MCF 10A (cell line): ENCODE measurements at regions of chr15 and their contacts with region 1.

Region 1: DNA sequence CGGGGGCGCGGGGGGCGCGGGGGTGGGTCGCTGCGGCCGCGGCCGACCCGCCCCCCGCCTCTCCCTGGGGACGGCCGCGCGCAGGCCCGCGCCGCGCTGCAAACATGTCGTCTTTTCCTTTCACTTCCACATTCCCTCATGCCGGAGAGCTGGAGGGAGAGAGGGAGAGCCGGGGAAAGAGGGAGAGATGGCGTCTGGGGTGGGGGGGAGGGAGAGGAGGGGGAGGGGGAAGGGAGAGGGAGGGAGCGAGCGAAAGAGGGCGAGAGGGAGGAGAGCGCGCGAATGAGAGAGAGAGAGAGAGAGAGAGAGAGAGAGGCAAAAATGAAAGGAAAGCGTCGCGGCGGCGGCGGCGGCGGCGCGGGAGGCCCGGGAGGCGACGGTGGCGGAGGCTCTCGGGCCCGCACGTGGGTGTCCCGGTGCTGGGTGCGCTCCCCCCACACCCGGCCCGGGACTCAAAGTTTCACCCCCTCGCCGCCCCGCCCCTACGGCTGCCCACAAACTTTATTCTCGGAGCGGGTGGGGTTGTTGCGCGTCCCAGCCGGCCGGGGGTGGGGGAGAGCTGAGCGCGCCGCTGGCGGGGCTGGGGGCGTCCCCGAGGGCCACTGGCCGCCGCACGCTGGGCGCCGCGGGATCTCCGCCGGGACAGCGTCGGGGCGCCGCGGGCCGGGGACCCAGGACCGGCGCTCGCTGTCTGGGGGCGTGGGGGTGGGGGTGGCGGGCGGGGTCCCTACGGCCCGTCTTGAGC is 731 bp downstream of the ZNF710 start:
- DNase-seq: peak; percentile 53
- H3K4me3 Mint-ChIP-seq: peak overlapping the region; percentile 92
- H3K27ac Mint-ChIP-seq: peak overlapping the region; percentile 93
- H3K4me1 Mint-ChIP-seq: peaks cover 51% of the 10 kb centered on the region
- H3K27me3 Mint-ChIP-seq: no peaks in the 10 kb centered on the region
- CTCF ChIP-seq: no peak

Region 2: DNA sequence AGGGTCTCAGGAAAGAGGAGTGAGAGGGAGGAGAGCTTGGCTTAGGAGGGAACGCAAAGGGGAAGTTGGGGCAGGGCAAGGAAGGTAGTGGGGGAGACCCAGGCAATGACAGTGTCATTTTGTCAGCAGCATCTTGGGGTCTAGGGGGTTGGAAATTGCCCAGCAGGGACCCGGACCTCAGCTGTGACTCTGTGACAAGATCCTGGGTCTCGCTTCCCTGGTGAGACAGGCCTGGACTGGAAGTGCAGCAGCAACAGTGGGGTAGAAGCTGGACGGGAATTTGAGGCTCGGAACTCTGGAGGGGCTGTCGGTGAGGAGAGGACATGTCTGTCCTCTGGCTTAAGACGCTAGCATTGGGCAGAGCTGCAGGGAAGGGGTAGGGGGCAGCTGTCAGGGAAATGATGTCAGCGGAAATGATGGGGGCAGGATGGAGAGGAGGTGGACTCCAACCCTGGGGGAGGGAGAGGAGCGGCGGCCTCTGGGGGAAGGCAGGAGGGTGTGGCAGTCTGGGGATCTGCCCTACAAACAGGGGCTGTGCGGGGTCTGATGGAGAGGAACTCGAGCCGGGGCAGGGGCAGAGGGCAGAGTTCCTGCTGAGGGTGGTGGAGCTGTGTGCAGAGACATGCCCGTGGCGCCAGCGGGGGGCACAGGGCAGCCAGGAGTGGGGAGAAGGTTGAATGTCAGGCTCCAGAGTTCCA is 199.5 kb before region 1 on chr15:
- CTCF ChIA-PET with region 1: no interaction called
- POLR2A ChIA-PET with region 1: no interaction called
- intact Hi-C with region 1: no loop called
- DNase-seq: no peak
- H3K4me3 Mint-ChIP-seq: no peak overlapping the region
- H3K27ac Mint-ChIP-seq: peak overlapping the region; percentile 46
- H3K4me1 Mint-ChIP-seq: peaks cover under 1% of the 10 kb centered on the region
- H3K27me3 Mint-ChIP-seq: no peaks in the 10 kb centered on the region
- CTCF ChIP-seq: no peak

Region 3: DNA sequence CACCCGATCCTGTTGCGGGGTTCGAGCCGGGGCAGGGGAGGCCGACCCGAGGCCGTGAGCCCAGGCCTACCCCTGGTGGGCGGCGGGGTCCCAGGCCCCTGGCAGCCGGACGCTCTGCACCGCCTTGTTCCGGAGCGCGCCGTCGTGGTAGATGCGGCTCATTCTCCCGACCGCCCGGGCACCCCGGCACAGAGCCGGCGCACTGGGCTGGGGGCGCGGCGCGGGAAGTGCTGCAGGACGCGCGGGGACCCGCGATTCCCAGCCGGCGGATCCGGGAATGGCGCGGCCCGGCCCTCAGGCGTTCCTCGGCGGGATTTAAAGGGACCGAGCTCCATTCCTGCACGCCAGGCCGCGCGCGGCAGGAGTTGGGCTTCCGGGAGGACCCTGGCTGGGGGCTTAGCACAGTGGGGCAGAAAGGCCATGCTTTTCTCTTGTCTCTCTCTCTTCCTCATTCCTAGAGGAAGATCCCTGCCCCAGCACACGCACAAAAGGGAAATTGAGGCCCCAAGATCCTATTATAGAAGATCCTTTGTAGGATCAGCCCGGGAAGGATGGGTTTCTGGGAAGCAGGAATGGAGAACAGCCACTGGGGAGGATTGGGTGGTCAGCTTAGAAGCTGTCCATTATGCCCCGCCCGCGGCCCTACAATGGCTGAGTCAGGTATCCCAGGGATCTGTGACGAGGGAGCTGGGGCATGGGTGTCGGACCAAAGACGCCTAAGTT is 89.0 kb before region 1 on chr15 and contains the start of gene ARPIN:
- CTCF ChIA-PET with region 1: no interaction called
- POLR2A ChIA-PET with region 1: interaction called, 11 read pairs
- intact Hi-C with region 1: no loop called
- DNase-seq: peak; percentile 52
- H3K4me3 Mint-ChIP-seq: peak within 1 kb of the TSS; percentile 76
- H3K27ac Mint-ChIP-seq: no peak within 1 kb of the TSS
- H3K4me1 Mint-ChIP-seq: peaks cover 27% of the 10 kb centered on the region
- H3K27me3 Mint-ChIP-seq: no peaks in the 10 kb centered on the region
- CTCF ChIP-seq: no peak
- total RNA-seq, gene ARPIN: 7.1 and 9.9 TPM in 2 replicates

Region 4: GRCh38 chr15:89958074-89958805 is 43.6 kb before region 1 on chr15:
- CTCF ChIA-PET with region 1: no interaction called
- POLR2A ChIA-PET with region 1: interaction called, 25 read pairs
- intact Hi-C with region 1: no loop called
- DNase-seq: peak; percentile 83
- H3K4me3 Mint-ChIP-seq: peak overlapping the region; percentile 14
- H3K27ac Mint-ChIP-seq: peak overlapping the region; percentile 90
- H3K4me1 Mint-ChIP-seq: peaks cover 15% of the 10 kb centered on the region
- H3K27me3 Mint-ChIP-seq: no peaks in the 10 kb centered on the region
- CTCF ChIP-seq: no peak

Region 5: GRCh38 chr15:90013503-90013937 is 11.7 kb after region 1 on chr15:
- CTCF ChIA-PET with region 1: interaction called, 10 read pairs
- POLR2A ChIA-PET with region 1: interaction called, 173 read pairs
- intact Hi-C with region 1: no loop called
- DNase-seq: no peak
- H3K4me3 Mint-ChIP-seq: no peak overlapping the region
- H3K27ac Mint-ChIP-seq: peak overlapping the region; percentile 43
- H3K4me1 Mint-ChIP-seq: peaks cover 34% of the 10 kb centered on the region
- H3K27me3 Mint-ChIP-seq: no peaks in the 10 kb centered on the region
- CTCF ChIP-seq: no peak

Region 6: DNA sequence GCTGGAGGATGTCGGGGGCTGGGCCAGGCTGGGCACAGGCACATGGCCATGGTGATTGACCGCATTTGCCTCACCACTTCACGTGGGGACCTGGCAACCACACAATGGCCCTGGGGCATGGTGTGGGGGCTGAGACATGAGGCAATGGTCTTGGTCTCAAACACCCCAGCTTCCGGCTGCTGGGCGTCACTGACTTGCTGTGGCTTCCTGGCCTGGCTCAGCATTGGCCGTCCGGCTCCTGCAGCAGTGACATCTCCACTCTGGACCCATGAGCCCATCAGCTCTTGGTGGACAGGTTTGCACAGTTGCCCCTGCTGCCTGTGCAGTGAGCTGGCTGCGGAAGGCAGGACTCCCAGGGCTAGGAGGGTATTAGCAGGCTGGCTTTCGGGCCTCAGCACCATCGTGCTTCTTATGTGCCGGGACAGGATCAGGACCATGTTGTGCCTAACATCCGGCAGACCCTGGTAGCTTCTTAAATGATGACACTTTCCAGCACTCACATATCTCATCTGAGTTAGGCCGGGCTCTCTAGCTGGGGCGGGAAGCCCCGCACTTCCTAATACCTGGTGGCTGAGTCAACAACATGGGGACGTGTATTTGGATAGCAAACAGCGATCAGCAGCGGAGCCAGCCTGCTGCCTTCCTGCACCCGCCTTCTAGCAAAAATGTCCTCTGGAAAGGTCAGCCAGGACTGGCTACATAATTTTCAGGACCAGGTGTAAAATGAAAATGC is 33.4 kb after region 1 on chr15:
- CTCF ChIA-PET with region 1: interaction called, 3 read pairs
- POLR2A ChIA-PET with region 1: interaction called, 22 read pairs
- intact Hi-C with region 1: no loop called
- DNase-seq: peak; percentile 88
- H3K4me3 Mint-ChIP-seq: peak overlapping the region; percentile 25
- H3K27ac Mint-ChIP-seq: peak overlapping the region; percentile 37
- H3K4me1 Mint-ChIP-seq: peaks cover 51% of the 10 kb centered on the region
- H3K27me3 Mint-ChIP-seq: no peaks in the 10 kb centered on the region
- CTCF ChIP-seq: no peak

Region 7: GRCh38 chr15:90062023-90062442 is 60.2 kb after region 1 on chr15:
- CTCF ChIA-PET with region 1: interaction called, 4 read pairs
- POLR2A ChIA-PET with region 1: interaction called, 7 read pairs
- intact Hi-C with region 1: loop called (anchors 1 kb)
- DNase-seq: peak; percentile 88
- H3K4me3 Mint-ChIP-seq: no peak overlapping the region
- H3K27ac Mint-ChIP-seq: peak overlapping the region; percentile 55
- H3K4me1 Mint-ChIP-seq: peaks cover 25% of the 10 kb centered on the region
- H3K27me3 Mint-ChIP-seq: no peaks in the 10 kb centered on the region
- CTCF ChIP-seq: no peak